IMR-90 (cell line): ENCODE measurements at regions of chr3 and their contacts with region 1.

Region 1: DNA sequence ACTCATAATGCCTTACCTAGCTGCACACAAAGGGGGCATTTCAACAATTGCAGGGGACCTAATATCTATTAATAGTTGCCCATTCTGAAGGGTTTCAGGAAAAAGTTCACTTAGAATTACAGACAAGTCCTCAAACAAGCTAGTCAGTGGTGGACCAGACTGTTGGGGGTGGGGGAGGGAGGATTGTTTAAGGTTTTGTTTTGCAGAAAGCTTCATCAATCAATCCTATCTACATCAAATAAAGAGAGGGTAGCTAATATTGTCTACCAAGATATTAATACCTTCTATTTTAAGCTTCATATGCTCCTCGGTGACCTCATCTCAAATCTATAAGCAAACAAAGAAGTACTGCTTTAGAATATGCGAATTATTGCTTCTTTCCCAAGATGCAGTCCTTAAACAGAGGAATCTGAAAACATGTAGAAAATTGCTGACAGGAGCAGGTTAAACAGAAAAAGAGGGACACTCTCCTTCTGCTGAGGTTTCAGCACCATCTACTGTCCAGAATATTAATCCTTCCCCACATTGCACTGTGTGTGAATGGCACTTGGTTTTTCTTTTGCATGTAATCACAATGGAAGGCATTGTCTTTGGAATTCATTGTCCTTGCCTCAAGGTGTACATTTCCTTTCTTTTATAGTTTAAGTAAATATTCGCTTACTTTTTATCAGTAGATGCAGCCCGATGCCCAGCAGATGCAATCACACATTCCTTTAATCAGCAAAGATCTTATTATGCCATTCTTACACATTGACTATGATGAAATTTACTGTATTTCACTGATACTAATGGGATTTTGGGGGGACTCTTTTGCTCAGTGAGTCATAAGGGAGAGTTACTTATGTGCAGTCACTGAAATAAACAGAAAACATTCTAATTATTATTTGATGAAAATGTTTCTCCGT is 94.7 kb downstream of the IL5RA start:
- DNase-seq: peak; percentile 23
- ATAC-seq: peak; percentile 77
- H3K4me3 ChIP-seq: no peak overlapping the region
- H3K27ac ChIP-seq: no peak overlapping the region
- H3K4me1 ChIP-seq: no peaks in the 10 kb centered on the region
- H3K27me3 ChIP-seq: no peaks in the 10 kb centered on the region
- CTCF ChIP-seq: peak; percentile 61
- POLR2A ChIP-seq: no peak
- RAD21 ChIP-seq: peak; percentile 72

Region 2: DNA sequence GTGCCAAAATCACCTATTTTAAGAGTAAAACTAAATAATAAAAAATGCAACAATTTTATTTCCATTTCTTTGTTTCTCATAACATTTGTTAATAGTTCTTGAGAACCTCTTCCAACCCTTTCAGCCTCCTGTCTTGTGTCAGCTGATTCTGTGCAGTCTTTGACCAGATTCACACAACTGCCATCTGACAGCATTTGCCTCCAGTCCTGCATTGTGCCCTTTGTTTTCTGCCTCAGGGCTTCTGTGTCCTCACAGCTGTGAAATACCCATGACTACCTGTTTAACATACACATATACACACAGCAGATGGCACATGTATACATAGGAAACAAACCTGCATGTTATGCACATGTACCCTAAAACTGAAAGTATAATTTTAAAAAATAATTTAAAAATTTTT is 1935.8 kb before region 1 on chr3:
- CTCF ChIA-PET with region 1: no interaction called
- POLR2A ChIA-PET with region 1: no interaction called
- dilution Hi-C with region 1: no loop called
- in situ Hi-C with region 1: no loop called
- intact Hi-C with region 1: loop called (anchors 10 kb)
- DNase-seq: no peak
- ATAC-seq: no peak
- H3K4me3 ChIP-seq: no peak overlapping the region
- H3K27ac ChIP-seq: no peak overlapping the region
- H3K4me1 ChIP-seq: no peaks in the 10 kb centered on the region
- H3K27me3 ChIP-seq: no peaks in the 10 kb centered on the region
- CTCF ChIP-seq: no peak
- POLR2A ChIP-seq: no peak
- RAD21 ChIP-seq: no peak